ENCODE measurements at regions of chr2 and their contacts with region 1.

Region 1: GRCh38 chr2:113686537-113686936 is 59.5 kb downstream of the RABL2A start:
- DNase-seq: peak; percentile 59
- ATAC-seq: peak; percentile 87
- H3K4me3 ChIP-seq: no peak overlapping the region
- H3K27ac ChIP-seq: no peak overlapping the region
- H3K4me1 ChIP-seq: peaks cover 4% of the 10 kb centered on the region; the same call in 1 of the 2 replicates
- H3K27me3 ChIP-seq: no peaks in the 10 kb centered on the region
- CTCF ChIP-seq: no peak

Region 2: GRCh38 chr2:113602869-113603466 is 83.6 kb before region 1 on chr2:
- CTCF ChIA-PET with region 1: interaction called, 10 read pairs
- POLR2A ChIA-PET with region 1: no interaction called
- intact Hi-C with region 1: no loop called
- DNase-seq: no peak
- ATAC-seq: peak; percentile 74
- H3K4me3 ChIP-seq: peak overlapping the region; percentile 58
- H3K27ac ChIP-seq: no peak overlapping the region
- H3K4me1 ChIP-seq: no peaks in the 10 kb centered on the region
- H3K27me3 ChIP-seq: no peaks in the 10 kb centered on the region
- CTCF ChIP-seq: no peak

Measured in PC-3 (cell line).